Heart right ventricle (tissue), 16 donors: ENCODE measurements at regions of chr16 and their contacts with region 1.

Region 1: DNA sequence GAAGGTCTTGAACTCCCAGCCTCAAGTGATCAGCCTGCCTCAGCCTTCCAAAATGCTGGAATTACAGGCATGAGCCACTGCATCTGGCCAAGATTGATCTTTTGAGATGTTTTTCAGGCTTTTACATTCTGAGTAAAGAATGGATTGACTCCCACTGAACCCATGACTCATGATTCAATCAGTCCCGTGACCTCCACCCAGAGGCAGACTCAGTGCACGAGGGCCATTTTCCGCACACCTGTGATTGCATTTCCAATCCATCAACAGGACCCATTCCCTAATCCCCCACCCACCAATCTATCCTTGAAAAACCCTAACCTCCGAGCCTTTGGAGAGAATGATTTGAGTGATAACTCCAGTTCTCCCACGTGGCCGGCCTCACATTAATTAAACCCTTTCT is 40.4 kb upstream of the PRKCB start:
- DNase-seq: no peak
- ATAC-seq: no peak
- H3K4me3 ChIP-seq: no peak overlapping the region
- H3K27ac ChIP-seq: no peak overlapping the region
- H3K4me1 ChIP-seq: no peaks in the 10 kb centered on the region
- H3K27me3 ChIP-seq: peaks cover 0 to 30% (median 5%) of the 10 kb centered on the region in 7 donors
- CTCF ChIP-seq: no peak

Region 2: DNA sequence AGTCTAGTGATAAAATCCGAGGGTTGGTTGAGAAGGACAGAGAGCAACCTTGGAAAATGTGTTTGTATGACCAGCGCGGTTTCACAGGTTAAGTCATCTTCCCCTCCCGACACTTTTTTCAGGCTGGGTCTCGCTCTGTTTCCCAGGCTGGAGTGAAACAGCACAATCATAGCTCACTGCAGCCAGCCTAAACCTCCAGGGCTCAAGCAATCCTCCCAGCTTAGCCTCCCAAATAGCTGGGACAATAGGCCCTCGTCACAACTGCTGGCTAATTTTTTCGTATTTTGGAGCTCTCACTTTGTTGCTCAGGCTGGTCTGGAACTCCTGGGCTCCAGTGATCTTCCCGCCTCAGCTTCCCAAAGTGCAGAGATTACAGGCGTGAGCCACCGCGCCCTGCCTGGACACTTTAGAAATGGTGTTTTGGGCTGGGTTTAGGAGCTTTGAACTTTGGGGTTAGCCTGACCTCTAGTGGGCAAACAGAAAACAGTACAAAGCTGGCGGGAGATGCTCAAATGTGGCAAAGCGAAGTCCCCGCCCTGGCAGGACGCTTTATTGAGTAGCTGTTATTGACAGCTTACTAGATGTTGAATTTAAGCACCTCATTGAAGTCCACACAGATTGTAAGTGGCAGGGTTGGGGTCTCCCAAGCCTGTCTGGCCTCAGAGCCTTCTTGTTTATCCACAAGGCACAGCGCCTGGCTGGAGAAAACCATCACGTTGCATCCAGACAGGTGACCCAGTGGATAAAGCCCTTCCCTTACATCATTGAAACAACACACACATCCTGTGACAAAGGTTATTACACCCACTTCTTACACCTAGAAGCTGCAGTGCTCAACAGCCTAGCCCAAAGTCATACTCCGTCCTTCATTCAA is 709.3 kb after region 1 on chr16:
- intact Hi-C with region 1: loop called in 8 of 10 experiments (anchors 5 to 10 kb)
- DNase-seq: peak; percentile 15 to 48
- ATAC-seq: peak; percentile 55 to 88 (median 71)
- H3K4me3 ChIP-seq: no peak overlapping the region
- H3K27ac ChIP-seq: no peak overlapping the region
- H3K4me1 ChIP-seq: no peaks in the 10 kb centered on the region
- H3K27me3 ChIP-seq: peaks cover 0 to 47% (median 37%) of the 10 kb centered on the region in 7 donors
- CTCF ChIP-seq: peak; percentile 62 to 82 (median 76)

Region 3: DNA sequence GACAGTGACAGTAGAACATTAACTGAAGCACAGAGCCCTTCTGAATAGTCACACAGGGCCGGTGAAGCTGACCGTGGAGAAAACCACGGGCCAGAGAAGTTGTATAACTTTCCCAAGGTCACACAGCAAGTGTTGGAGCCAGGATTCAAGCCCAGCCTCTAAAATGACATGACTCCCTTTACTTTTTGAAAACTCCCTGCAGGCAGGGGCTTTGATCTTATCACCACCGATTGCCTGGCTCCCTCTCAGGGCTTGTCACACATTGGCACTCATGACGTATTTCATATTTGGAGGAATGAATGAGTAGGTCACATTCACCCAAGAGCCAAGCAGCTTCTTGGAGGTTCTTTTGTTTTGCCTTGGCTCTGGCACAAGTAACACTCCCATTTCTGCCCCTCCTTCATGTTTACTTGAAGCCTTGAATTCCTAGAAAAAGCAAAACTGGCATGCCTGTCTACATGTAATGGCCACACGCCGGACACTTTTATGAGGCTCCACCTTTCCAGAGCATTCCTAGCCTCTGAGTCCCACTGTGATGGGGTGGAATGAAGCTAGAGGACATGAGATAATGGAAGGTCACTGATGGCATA is 730.7 kb after region 1 on chr16:
- intact Hi-C with region 1: no loop called
- DNase-seq: no peak
- ATAC-seq: no peak
- H3K4me3 ChIP-seq: no peak overlapping the region
- H3K27ac ChIP-seq: no peak overlapping the region
- H3K4me1 ChIP-seq: peaks cover 0 to 9% (median 0%) of the 10 kb centered on the region in 9 donors
- H3K27me3 ChIP-seq: peaks cover 0 to 10% (median 0%) of the 10 kb centered on the region in 7 donors
- CTCF ChIP-seq: no peak